ENCODE measurements at regions of chr1 and their contacts with region 1.

Region 1: DNA sequence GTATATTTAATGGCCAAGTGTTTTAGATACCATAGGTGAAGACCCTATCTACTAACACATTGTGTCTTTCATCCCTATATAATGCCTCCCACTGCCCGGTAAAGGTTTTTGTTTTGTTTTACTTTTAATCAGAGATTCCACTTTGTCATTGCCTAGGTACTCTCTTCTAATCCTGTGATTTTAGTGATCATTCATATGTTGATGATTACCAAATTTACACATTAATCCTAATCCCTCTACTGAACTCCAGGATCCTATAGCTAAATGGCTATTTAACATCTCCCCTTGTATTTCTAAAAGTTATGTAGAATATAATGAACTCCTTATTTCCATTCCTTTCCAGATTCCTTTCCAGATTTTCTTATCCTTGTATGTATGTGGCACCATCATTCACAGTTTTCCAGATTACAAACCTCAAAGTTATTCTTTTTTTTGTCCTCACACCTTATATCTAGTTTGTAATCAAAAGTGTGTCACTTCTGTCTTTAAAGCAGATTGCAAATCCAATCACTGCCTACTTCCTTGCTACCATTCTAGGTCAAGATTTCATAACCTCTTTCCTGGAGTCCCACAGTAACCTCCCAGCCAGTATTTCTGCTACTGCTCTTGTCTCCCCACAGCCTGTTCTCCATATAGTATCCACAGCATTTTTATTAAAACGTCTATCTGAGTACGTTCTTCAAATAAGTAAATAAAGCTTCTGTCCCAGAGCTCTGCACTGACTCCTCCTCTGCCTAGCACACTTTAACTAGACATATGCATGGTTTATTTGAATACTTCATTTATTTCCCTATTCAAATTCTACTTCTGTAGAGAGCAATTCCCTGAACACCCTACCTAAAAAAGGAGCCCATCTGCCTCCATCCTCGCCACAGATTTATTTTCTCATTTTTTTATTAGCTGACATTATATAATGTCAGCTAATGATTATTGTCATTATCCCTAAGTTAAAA is 157.8 kb downstream of the KCNT2 start:
- DNase-seq: no peak
- H3K4me3 ChIP-seq: no peak overlapping the region
- H3K27ac ChIP-seq: no peak overlapping the region
- H3K4me1 ChIP-seq: no peaks in the 10 kb centered on the region
- H3K27me3 ChIP-seq: no peaks in the 10 kb centered on the region
- CTCF ChIP-seq: no peak

Region 2: DNA sequence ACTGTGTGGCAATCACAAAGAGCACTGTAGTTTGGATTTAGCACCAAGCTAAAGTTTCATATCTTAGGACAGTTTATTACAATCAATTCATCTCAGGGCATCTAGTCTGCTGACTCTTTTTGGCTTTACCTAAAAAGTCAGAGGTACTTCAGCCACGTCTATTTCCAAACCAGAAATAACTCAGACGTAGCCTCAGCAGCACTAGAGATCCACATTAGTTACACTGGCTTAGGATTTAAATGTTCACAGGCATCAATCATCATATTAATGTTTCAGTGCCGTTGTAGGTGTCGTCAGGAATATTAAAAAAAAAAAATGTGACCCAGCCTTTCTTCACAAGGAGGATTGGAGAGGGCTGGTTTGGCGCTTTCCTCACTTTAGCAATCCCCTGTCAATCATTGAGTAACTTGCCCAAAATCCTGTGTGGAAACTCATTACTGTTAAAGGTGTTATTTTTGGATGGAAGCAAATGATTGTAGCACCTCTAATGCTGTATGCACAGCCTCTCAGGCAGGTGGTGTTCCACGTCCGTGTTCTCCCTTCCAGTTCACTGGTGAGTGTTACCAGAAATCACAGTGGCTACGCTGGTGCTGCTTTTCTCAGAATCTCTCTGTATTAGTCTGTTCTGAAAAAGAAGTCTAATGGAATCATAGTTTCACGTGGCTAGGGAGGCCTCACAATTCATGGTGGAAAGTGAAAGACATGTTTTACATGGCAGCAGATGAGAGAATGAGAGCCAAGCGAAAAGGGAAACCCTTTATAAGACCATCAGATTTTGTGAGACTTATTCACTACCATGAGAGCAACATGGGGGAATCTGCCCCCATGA is 1751.8 kb after region 1 on chr1:
- CTCF ChIA-PET with region 1: no interaction called
- POLR2A ChIA-PET with region 1: interaction called, 29 read pairs
- intact Hi-C with region 1: no loop called
- DNase-seq: no peak
- H3K4me3 ChIP-seq: no peak overlapping the region
- H3K27ac ChIP-seq: no peak overlapping the region
- H3K4me1 ChIP-seq: peaks cover 10% of the 10 kb centered on the region
- H3K27me3 ChIP-seq: no peaks in the 10 kb centered on the region
- CTCF ChIP-seq: no peak

Measured in A673 (cell line).